Mammary epithelial cell (primary cell): ENCODE measurements at regions of chr6 and their contacts with region 1.

Region 1: GRCh38 chr6:37566111-37566949 is 66.6 kb upstream of the CCDC167 start:
- DNase-seq: peak; percentile 13
- H3K4me3 ChIP-seq: peak overlapping the region in 2 of 3 experiments; percentile 28 to 29
- H3K27ac ChIP-seq: no peak overlapping the region
- H3K4me1 ChIP-seq: no peaks in the 10 kb centered on the region
- H3K27me3 ChIP-seq: peaks cover 3% of the 10 kb centered on the region
- CTCF ChIP-seq: peak; percentile 71 to 90

Region 2: DNA sequence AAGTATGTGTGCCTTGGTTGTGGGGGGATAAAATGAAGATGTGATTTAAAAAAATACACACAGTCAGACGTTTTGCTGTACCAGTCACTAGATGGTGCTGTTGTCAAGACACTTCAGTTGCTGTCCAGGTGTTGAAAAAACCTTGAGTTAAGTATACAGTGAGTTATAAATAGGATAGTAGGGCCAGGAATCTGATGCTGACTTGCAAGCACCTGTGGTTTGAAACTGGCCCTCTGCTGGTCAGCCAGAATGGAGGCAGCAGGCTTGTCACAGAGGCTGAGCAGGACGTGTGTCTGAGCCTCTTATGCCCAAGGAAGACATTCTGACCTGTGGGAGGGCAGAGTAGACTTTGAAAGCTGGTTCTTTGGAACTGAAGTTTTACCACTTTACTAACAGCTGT is 184.8 kb before region 1 on chr6:
- CTCF ChIA-PET with region 1: no interaction called
- dilution Hi-C with region 1: no loop called
- in situ Hi-C with region 1: no loop called
- intact Hi-C with region 1: loop called (anchors 1 kb)
- DNase-seq: peak; percentile 68
- H3K4me3 ChIP-seq: no peak overlapping the region
- H3K27ac ChIP-seq: no peak overlapping the region
- H3K4me1 ChIP-seq: peaks cover 6% of the 10 kb centered on the region
- H3K27me3 ChIP-seq: no peaks in the 10 kb centered on the region
- CTCF ChIP-seq: peak; percentile 84 to 87

Region 3: GRCh38 chr6:37432916-37433656 is 133.2 kb before region 1 on chr6 and contains the start of gene CMTR1:
- CTCF ChIA-PET with region 1: no interaction called
- dilution Hi-C with region 1: no loop called
- in situ Hi-C with region 1: no loop called
- intact Hi-C with region 1: loop called (anchors 5 kb)
- DNase-seq: peak; percentile 84
- H3K4me3 ChIP-seq: peak within 1 kb of the TSS; percentile 72 to 83 (median 82)
- H3K27ac ChIP-seq: peak within 1 kb of the TSS; percentile 53
- H3K4me1 ChIP-seq: peaks cover 6% of the 10 kb centered on the region
- H3K27me3 ChIP-seq: no peaks in the 10 kb centered on the region
- CTCF ChIP-seq: no peak
- total RNA-seq, gene CMTR1: 23.2 to 31.8 TPM

Region 4: DNA sequence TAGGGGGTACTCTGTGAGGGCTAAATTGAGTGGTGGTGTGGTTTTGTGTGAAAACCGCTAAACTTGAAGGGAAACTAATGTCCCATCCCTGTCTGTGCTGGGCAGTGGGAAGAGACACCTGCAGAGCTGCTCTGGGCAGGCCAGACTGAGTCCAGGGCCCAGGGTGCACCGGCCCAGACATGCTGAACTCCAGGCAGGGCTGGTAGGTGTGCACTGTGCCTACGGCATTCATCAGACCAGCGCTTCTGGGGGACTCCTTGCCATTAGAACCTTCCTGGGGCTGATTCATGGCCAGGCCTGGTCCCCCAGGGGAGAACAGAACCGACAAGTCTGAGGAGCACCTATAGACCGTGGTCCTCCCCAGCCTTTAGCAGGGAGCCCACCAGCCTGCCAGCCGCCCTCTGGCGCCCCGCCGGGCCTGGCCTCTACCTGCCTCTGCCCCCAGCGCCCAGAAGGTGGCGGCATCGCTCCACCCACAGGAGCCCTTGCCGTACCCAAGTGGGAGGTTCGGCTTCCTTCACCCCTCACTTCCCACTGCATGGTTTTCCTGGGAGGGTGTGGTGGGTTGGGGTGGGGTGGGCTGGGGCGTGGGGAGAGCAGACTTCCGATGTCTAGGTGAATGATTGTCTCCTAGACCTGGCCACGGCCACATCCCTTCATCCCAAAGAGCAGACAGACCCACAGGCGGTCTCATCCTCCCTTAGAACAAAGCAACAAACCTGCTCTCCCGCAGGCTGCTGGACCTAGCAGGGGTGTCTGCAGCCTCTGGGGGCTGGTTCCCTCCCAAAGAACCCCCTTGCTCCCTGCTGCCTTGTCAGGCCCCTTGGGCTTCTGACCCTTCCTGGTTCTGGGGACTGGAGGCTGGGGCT is 82.2 kb before region 1 on chr6:
- CTCF ChIA-PET with region 1: interaction called, 3 read pairs
- dilution Hi-C with region 1: no loop called
- in situ Hi-C with region 1: no loop called
- intact Hi-C with region 1: loop called (anchors 1 kb)
- DNase-seq: peak; percentile 20
- H3K4me3 ChIP-seq: no peak overlapping the region
- H3K27ac ChIP-seq: no peak overlapping the region
- H3K4me1 ChIP-seq: no peaks in the 10 kb centered on the region
- H3K27me3 ChIP-seq: no peaks in the 10 kb centered on the region
- CTCF ChIP-seq: peak; percentile 81 to 87

Region 5: GRCh38 chr6:37502703-37503291 is 63.5 kb before region 1 on chr6:
- CTCF ChIA-PET with region 1: no interaction called
- dilution Hi-C with region 1: no loop called
- in situ Hi-C with region 1: no loop called
- intact Hi-C with region 1: no loop called
- DNase-seq: no peak
- H3K4me3 ChIP-seq: no peak overlapping the region
- H3K27ac ChIP-seq: no peak overlapping the region
- H3K4me1 ChIP-seq: peaks cover 7% of the 10 kb centered on the region
- H3K27me3 ChIP-seq: no peaks in the 10 kb centered on the region
- CTCF ChIP-seq: no peak

Region 6: GRCh38 chr6:37525460-37526357 is 40.6 kb before region 1 on chr6:
- CTCF ChIA-PET with region 1: no interaction called
- dilution Hi-C with region 1: loop called (anchors 5 kb)
- in situ Hi-C with region 1: no loop called
- intact Hi-C with region 1: no loop called
- DNase-seq: no peak
- H3K4me3 ChIP-seq: no peak overlapping the region
- H3K27ac ChIP-seq: no peak overlapping the region
- H3K4me1 ChIP-seq: peaks cover 8% of the 10 kb centered on the region
- H3K27me3 ChIP-seq: no peaks in the 10 kb centered on the region
- CTCF ChIP-seq: no peak

Region 7: DNA sequence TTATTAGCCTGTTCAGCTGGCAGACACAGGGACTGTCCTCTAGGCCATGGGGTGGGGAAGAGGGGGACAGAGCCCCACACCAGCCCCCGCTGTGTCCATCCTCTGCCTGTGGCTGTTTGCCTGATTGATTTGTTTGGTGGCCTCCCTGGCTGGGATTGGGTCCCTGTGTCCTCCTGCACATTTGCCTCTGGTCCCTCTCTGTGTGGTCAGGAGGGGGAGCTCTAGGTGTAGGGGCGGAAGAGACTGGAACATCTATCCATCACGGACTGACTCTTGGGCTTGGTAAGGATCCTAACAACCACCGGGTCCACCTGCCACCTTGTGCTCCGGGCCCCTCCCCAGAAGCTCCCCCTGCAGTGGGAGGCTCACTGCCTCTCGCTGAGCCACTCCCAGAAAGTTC is 28.2 kb before region 1 on chr6:
- CTCF ChIA-PET with region 1: interaction called, 3 read pairs
- dilution Hi-C with region 1: no loop called
- in situ Hi-C with region 1: no loop called
- intact Hi-C with region 1: loop called (anchors 1 kb)
- DNase-seq: peak; percentile 35
- H3K4me3 ChIP-seq: no peak overlapping the region
- H3K27ac ChIP-seq: no peak overlapping the region
- H3K4me1 ChIP-seq: peaks cover 8% of the 10 kb centered on the region
- H3K27me3 ChIP-seq: peaks cover 4% of the 10 kb centered on the region
- CTCF ChIP-seq: peak; percentile 52 to 82

Region 8: DNA sequence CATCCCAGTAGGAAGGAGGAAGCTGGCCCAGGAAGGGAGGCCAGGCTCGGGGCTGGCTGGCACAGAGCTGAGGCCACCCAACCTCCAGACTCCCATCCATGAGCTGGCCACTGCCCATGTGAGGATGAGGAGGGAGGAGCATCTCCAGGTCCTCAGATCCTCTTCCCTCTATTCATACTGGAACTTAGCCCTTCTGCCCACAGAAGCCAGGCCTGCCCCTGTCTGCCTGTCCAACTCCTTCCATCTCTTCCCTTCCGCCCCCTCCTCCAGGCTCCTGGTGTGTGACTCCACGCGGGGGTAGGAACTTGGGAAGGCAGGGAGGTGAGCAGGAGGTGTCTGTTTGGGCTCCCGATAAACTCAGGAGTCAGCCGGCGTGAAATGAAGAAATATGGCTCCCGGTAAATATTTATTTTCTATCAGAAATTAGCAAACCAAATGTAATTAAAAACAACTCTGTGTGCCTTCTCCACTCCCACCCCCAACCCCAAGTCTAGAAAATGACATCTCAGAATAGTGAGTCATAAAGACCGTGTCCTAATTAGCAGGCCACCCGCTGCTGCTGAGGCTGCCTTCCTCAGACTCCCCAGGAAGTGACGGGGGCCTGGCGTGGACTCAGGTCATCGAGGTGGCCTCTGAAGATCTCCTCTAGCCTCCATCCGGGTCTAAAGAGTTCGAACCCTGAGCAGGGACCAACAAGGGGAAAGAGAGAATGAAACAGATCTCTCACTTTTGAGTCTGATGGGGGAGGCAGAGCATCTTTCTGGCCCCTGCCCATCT is 49.4 kb after region 1 on chr6:
- CTCF ChIA-PET with region 1: no interaction called
- dilution Hi-C with region 1: loop called (anchors 5 kb)
- in situ Hi-C with region 1: no loop called
- intact Hi-C with region 1: no loop called
- DNase-seq: no peak
- H3K4me3 ChIP-seq: no peak overlapping the region
- H3K27ac ChIP-seq: no peak overlapping the region
- H3K4me1 ChIP-seq: peaks cover 2% of the 10 kb centered on the region
- H3K27me3 ChIP-seq: no peaks in the 10 kb centered on the region
- CTCF ChIP-seq: no peak